A673 (cell line): ENCODE measurements at regions of chr4 and their contacts with region 1.

Region 1: GRCh38 chr4:15681207-15682015 is at the start of gene FAM200B:
- DNase-seq: peak; percentile 100
- H3K4me3 ChIP-seq: peak within 1 kb of the TSS; percentile 67
- H3K27ac ChIP-seq: peak within 1 kb of the TSS; percentile 92
- H3K4me1 ChIP-seq: peaks cover 44% of the 10 kb centered on the region
- H3K27me3 ChIP-seq: no peaks in the 10 kb centered on the region
- CTCF ChIP-seq: 0 out of 2 replicates have a peak, but pooled peaks have one; percentile 20
- total RNA-seq, gene FAM200B: 27.4 and 29.0 TPM in 2 replicates

Region 2: GRCh38 chr4:15655229-15656037 is 26.0 kb before region 1 on chr4 and contains the start of gene FBXL5:
- CTCF ChIA-PET with region 1: no interaction called
- POLR2A ChIA-PET with region 1: no interaction called
- intact Hi-C with region 1: loop called (anchors 1 kb)
- DNase-seq: peak; percentile 94
- H3K4me3 ChIP-seq: peak within 1 kb of the TSS; percentile 73
- H3K27ac ChIP-seq: peak within 1 kb of the TSS; percentile 94
- H3K4me1 ChIP-seq: peaks cover 43% of the 10 kb centered on the region
- H3K27me3 ChIP-seq: no peaks in the 10 kb centered on the region
- CTCF ChIP-seq: no peak
- total RNA-seq, gene FBXL5: 59.7 and 60.1 TPM in 2 replicates

Region 3: DNA sequence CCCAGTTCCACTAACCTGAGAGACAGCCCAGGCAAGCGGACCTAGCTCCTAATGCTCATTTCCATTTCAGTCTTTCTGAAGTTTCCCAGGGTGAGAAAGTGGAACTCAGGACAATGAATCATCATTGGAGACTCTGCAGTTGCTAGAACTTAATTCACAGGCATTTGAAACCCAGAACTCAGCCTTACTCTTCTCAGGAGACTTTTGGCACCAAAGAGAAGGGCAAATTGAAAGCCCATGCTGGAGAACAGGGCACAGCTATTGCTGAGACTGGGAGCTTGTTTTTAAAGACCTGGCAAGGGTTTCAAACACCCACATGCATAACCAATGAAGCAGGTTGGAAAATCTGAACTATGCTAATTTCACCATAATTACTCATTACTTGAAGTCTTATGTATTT is 57.5 kb after region 1 on chr4:
- CTCF ChIA-PET with region 1: no interaction called
- POLR2A ChIA-PET with region 1: interaction called, 16 read pairs
- intact Hi-C with region 1: no loop called
- DNase-seq: no peak
- H3K4me3 ChIP-seq: no peak overlapping the region
- H3K27ac ChIP-seq: no peak overlapping the region
- H3K4me1 ChIP-seq: no peaks in the 10 kb centered on the region
- H3K27me3 ChIP-seq: no peaks in the 10 kb centered on the region
- CTCF ChIP-seq: no peak